ENCODE measurements at regions of chr16 and their contacts with region 1.

Region 1: DNA sequence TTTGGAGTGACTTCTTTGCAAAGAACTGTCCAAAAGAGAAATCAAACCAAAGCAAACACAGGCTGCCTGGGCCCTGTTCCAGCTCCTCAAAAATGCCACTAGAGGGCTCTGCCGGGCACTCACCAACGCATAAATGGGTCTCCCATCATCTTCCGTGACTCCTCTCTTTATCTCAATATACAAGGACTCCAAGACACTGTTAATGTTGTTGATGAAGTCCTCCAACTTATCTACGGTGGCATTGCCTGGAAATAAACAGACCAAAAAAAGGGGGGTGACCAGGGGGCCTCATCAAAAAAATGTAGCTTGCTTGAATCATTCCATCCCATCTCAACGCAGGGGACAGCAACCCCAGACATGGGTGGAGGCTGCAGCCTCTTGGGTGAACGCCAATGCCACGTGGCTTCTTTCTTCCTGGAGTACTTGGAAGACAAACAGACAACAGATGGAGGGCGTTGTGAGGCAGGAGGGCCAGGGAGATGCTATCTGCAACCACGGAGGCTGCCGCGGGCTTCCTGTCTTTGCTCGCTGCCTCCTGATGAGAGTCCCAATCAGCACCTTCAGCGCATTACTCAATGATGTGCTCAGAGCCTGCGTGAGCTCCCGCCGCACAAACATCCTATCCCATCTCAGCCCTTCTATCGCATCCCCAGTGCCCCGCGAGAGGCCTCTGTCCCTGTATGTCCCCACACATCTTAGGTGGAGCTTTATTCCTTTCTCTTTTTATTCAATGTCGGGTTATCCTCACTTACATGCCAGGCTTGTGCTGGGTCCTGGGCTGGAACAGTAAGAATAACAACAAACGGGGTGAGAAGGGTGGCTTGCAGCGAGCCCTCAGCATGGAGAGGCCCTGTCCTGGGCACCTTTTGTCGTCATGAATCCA is 32.0 kb downstream of the KDM8 start:
- DNase-seq: no peak
- H3K4me3 ChIP-seq: no peak overlapping the region
- H3K27ac ChIP-seq: no peak overlapping the region
- H3K4me1 ChIP-seq: no peaks in the 10 kb centered on the region; a peak in 1 of 7 replicates
- H3K27me3 ChIP-seq: no peaks in the 10 kb centered on the region
- CTCF ChIP-seq: peak; percentile 73 to 79 (median 76)
- EP300 ChIP-seq: no peak
- POLR2A ChIP-seq: no peak
- RAD21 ChIP-seq: peak; percentile 77 to 81

Region 2: GRCh38 chr16:27222249-27223225 is 12.8 kb before region 1 on chr16:
- CTCF ChIA-PET with region 1: interaction called, 73 read pairs
- POLR2A ChIA-PET with region 1: interaction called, 3 read pairs
- DNase-seq: no peak
- H3K4me3 ChIP-seq: no peak overlapping the region
- H3K27ac ChIP-seq: no peak overlapping the region
- H3K4me1 ChIP-seq: 0 out of 7 replicates have a peak, but pooled peaks cover 0 to 2% (median 0%) of the 10 kb centered on the region in 4 experiments
- H3K27me3 ChIP-seq: no peaks in the 10 kb centered on the region
- CTCF ChIP-seq: no peak
- EP300 ChIP-seq: no peak
- POLR2A ChIP-seq: no peak
- RAD21 ChIP-seq: no peak

Region 3: GRCh38 chr16:27273670-27274423 is 38.6 kb after region 1 on chr16:
- CTCF ChIA-PET with region 1: interaction called, 12 read pairs
- POLR2A ChIA-PET with region 1: no interaction called
- DNase-seq: peak in 1 of 2 experiments; percentile 30
- H3K4me3 ChIP-seq: no peak overlapping the region
- H3K27ac ChIP-seq: no peak overlapping the region
- H3K4me1 ChIP-seq: peaks cover 0 to 7% (median 0%) of the 10 kb centered on the region in 4 experiments; a peak in 2 of 7 replicates
- H3K27me3 ChIP-seq: no peaks in the 10 kb centered on the region
- CTCF ChIP-seq: no peak
- EP300 ChIP-seq: no peak
- POLR2A ChIP-seq: no peak
- RAD21 ChIP-seq: no peak

Region 4: GRCh38 chr16:27286451-27286850 is 51.2 kb after region 1 on chr16:
- CTCF ChIA-PET with region 1: no interaction called
- POLR2A ChIA-PET with region 1: no interaction called
- DNase-seq: no peak
- H3K4me3 ChIP-seq: no peak overlapping the region
- H3K27ac ChIP-seq: no peak overlapping the region
- H3K4me1 ChIP-seq: no peaks in the 10 kb centered on the region
- H3K27me3 ChIP-seq: no peaks in the 10 kb centered on the region
- CTCF ChIP-seq: no peak
- EP300 ChIP-seq: no peak
- POLR2A ChIP-seq: no peak
- RAD21 ChIP-seq: no peak

Region 5: DNA sequence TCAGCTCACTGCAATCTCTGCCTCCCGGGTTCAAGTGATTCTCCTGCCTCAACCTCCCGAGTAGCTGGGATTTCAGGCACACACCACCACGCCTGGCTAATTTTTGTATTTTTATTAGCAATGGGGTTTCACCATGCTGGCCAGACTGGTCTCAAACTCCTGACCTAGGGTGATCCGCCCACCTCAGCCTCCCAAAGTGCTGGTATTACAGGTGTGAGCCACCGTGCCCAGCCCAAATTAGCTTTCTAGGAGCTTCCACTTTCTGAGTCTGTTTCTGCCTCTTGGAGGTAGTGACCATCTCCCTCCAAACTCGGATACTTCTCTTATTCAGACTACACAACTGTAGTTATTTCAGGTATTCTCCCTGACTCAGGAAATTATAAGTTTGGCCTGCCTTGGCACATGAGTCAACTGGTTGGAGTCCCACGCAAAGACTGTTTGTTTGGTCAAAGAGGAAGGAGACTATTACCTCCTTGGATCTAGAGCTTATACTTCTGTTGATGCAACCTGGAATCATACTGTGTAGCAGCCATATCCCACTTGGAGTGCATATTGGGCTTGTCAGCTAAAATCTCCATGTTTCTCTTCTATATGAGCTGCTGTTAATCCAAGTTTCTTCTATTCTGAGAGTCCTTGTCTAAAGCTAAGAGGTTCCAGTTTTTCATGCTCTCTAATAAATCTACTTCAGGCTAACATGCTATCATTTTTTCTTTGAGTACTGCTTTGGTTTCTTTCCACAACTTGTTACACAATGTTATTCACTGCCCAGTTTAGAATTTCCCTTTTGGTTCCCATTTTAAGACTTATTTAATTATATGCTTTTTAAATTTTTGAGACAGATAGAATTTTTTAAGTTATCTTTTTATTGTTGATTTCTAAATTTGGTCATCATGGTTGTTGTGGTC is 86.0 kb after region 1 on chr16:
- CTCF ChIA-PET with region 1: interaction called, 13 read pairs
- POLR2A ChIA-PET with region 1: no interaction called
- DNase-seq: no peak
- H3K4me3 ChIP-seq: no peak overlapping the region
- H3K27ac ChIP-seq: no peak overlapping the region
- H3K4me1 ChIP-seq: peaks cover 14 to 25% (median 20%) of the 10 kb centered on the region in 4 experiments
- H3K27me3 ChIP-seq: no peaks in the 10 kb centered on the region
- CTCF ChIP-seq: no peak
- EP300 ChIP-seq: no peak
- POLR2A ChIP-seq: no peak
- RAD21 ChIP-seq: no peak

Region 6: DNA sequence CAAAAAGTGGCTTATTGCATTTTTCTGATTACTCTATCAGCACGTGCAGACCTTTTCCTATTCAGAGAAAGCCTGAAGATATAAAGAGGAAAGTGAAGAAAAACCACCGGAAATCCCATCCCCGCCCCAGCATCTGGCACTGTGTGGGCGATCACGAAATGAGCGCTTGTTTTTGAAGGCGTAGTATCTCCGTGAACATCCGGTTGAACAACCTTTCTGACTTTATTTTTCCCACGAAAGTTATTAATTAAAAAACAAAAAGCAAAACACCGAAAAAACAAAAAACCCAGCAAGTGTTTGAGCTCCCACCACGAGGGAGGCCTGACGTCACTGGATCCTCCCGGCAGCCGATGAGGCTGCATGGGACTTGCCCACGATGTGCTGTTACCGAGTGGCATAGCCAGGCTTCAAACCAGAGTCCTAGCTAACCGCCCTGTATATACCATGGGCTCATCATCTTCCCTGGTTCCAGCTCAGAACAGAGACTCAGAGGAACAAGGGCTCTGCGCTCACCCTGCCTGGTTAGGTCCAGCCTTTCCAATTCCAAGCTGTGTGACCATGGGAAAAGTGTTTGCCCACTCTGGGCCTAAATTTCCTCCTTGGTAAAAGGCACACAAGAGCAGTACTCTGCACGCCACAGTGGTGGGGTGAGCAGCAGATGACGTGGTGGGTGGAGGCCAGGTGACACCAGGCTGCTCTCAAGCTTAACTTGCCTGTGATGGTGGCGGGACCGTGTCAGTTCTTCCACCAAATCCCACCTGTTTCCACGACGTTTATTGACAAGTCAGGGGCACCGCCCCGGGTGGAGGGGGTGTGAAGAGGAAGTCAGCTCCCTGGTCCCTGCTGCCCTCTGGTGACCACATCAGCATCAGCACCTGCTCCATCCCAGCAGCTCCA is 132.4 kb after region 1 on chr16:
- CTCF ChIA-PET with region 1: interaction called, 241 read pairs
- POLR2A ChIA-PET with region 1: no interaction called
- DNase-seq: peak; percentile 41 to 88
- H3K4me3 ChIP-seq: no peak overlapping the region
- H3K27ac ChIP-seq: no peak overlapping the region
- H3K4me1 ChIP-seq: no peaks in the 10 kb centered on the region; a peak in 3 of 7 replicates
- H3K27me3 ChIP-seq: no peaks in the 10 kb centered on the region
- CTCF ChIP-seq: peak; percentile 89 to 93 (median 89)
- EP300 ChIP-seq: no peak
- POLR2A ChIP-seq: no peak
- RAD21 ChIP-seq: peak; percentile 91 to 93